HEK293 (cell line): ENCODE measurements at regions of chr3 and their contacts with region 1.

Region 1: DNA sequence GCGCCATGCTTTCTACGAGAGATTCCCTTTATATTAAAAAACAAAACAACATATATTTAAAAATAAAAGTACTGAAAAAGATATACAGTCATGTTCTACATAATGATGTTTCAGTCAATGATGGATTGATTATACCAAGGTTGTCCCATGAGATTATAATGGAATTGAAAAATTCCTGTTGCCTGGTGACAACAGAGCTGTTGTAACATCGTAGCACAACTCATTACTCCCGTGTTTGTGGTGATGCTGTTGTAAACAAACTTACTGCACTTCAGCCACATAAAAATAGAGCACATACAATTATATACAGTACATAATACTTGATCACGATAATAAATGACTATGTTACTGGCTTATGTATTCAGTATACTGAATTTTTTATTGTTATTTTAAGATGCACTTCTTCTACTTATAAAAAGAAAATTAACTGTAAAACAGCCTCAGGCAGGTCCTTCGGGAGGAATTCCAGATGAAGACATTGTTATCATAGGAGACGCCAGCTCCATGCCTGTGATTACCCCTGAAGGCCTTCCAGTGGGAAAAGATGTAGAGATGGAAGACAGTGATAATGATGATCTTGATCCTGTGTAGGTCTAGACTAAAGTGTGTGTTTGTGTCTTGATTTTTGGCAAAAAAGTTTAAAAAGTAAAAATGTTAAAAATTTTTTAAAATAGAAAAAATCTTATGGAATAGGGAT is 11.7 kb downstream of the CCR1 start:
- H3K4me3 ChIP-seq: no peak overlapping the region
- H3K27ac ChIP-seq: no peak overlapping the region
- H3K4me1 ChIP-seq: no peaks in the 10 kb centered on the region
- CTCF ChIP-seq: no peak

Region 2: GRCh38 chr3:46208167-46208704 is 11.8 kb after region 1 on chr3 and contains the start of gene CCR1:
- CTCF ChIA-PET with region 1: interaction called, 24 read pairs
- POLR2A ChIA-PET with region 1: no interaction called
- H3K4me3 ChIP-seq: no peak within 1 kb of the TSS
- H3K27ac ChIP-seq: no peak within 1 kb of the TSS
- H3K4me1 ChIP-seq: no peaks in the 10 kb centered on the region
- CTCF ChIP-seq: no peak

Region 3: GRCh38 chr3:46368569-46368968 is 172.2 kb after region 1 on chr3:
- CTCF ChIA-PET with region 1: no interaction called
- POLR2A ChIA-PET with region 1: no interaction called
- H3K4me3 ChIP-seq: no peak overlapping the region
- H3K27ac ChIP-seq: no peak overlapping the region
- H3K4me1 ChIP-seq: no peaks in the 10 kb centered on the region
- CTCF ChIP-seq: 0 out of 2 replicates have a peak, but pooled peaks have one; percentile 17